GM10248 (cell line): ENCODE measurements at regions of chr3 and their contacts with region 1.

Region 1: DNA sequence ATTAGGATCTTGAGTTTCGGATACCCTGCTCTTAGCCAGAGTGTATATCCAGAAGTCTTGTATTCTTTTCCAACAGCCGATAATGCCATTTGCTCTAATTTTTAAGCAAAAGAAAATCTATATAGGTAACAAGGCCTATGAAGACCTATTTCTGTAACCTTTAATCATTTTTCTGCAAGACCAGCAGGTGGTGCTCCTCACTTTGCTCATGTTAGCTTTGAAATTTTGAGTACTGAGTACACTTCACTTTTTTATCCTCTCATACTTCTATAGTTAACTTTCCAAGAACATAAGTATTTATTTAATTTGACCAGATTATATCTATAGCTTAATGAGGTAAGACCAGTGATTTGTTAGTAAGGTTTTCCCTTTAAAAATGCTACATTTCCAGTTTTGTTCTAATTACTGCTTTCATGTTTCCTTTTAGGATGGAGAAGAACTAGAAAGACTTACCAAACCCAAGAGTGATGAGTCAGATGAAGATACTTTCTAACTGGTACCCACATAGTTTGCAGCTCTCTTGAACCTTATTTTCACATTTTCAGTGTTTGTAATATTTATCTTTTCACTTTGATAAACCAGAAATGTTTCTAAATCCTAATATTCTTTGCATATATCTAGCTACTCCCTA is 20.5 kb downstream of the SLC35A5 start:
- DNase-seq: no peak
- CTCF ChIP-seq: peak; percentile 73

Region 2: GRCh38 chr3:112568642-112569041 is 13.7 kb before region 1 on chr3:
- CTCF ChIA-PET with region 1: interaction called, 15 read pairs
- POLR2A ChIA-PET with region 1: no interaction called
- DNase-seq: no peak
- CTCF ChIP-seq: no peak

Region 3: DNA sequence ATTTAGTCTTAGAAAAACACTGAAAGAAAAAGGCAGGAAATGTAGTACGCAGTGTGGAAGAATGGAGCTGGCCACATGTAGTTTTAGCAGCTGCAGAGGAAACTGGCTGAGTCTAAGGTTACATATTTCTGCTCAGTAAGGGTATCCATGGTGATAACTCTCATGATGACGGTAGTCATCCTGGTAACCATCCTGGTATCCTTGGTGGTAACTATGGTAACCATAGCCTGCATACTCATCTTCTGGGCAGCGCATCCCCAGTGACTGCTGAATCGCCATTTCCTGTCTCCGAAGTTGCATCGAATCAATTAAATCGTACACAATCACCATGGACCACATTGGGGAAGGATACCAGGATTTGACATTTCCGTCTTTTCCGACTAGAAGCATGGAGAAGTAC is 22.9 kb after region 1 on chr3:
- CTCF ChIA-PET with region 1: interaction called, 10 read pairs
- POLR2A ChIA-PET with region 1: no interaction called
- DNase-seq: no peak
- CTCF ChIP-seq: no peak